WTC11 (cell line): ENCODE measurements at regions of chr17 and their contacts with region 1.

Region 1: GRCh38 chr17:4908301-4908700 is 5.4 kb upstream of the CHRNE start:
- DNase-seq: peak; percentile 50
- ATAC-seq: peak; percentile 44
- H3K4me3 Mint-ChIP-seq: no peak overlapping the region
- H3K27ac Mint-ChIP-seq: no peak overlapping the region
- H3K4me1 Mint-ChIP-seq: peaks cover 13% of the 10 kb centered on the region
- H3K27me3 Mint-ChIP-seq: peaks cover 5% of the 10 kb centered on the region; the same call in 1 of the 2 replicates
- CTCF ChIP-seq: no peak

Region 2: GRCh38 chr17:4881761-4882555 is 26.3 kb before region 1 on chr17:
- CTCF ChIA-PET with region 1: no interaction called
- POLR2A ChIA-PET with region 1: no interaction called
- DNase-seq: peak; percentile 85
- ATAC-seq: peak; percentile 96
- H3K4me3 Mint-ChIP-seq: no peak overlapping the region
- H3K27ac Mint-ChIP-seq: peak overlapping the region; percentile 83
- H3K4me1 Mint-ChIP-seq: peaks cover 13% of the 10 kb centered on the region
- H3K27me3 Mint-ChIP-seq: no peaks in the 10 kb centered on the region
- CTCF ChIP-seq: peak; percentile 81

Region 3: GRCh38 chr17:4920351-4921048 is 12.2 kb after region 1 on chr17:
- CTCF ChIA-PET with region 1: interaction called, 36 read pairs
- POLR2A ChIA-PET with region 1: interaction called, 12 read pairs
- DNase-seq: no peak
- ATAC-seq: no peak
- H3K4me3 Mint-ChIP-seq: no peak overlapping the region
- H3K27ac Mint-ChIP-seq: no peak overlapping the region
- H3K4me1 Mint-ChIP-seq: peaks cover 7% of the 10 kb centered on the region
- H3K27me3 Mint-ChIP-seq: no peaks in the 10 kb centered on the region; the same call in 1 of the 2 replicates
- CTCF ChIP-seq: no peak

Region 4: GRCh38 chr17:4939796-4940624 is 31.7 kb after region 1 on chr17 and contains the starts of genes RNF167 and SLC25A11:
- CTCF ChIA-PET with region 1: interaction called, 39 read pairs
- POLR2A ChIA-PET with region 1: interaction called, 3 read pairs
- DNase-seq: peak; percentile 93
- ATAC-seq: peak; percentile 84
- H3K4me3 Mint-ChIP-seq: peak within 1 kb of the TSS; percentile 96
- H3K27ac Mint-ChIP-seq: peak within 1 kb of the TSS; percentile 98
- H3K4me1 Mint-ChIP-seq: peaks cover 25% of the 10 kb centered on the region
- H3K27me3 Mint-ChIP-seq: no peaks in the 10 kb centered on the region
- CTCF ChIP-seq: no peak
- total RNA-seq, gene RNF167: 121 to 143 TPM (median 122 TPM) in 3 replicates
- total RNA-seq, gene SLC25A11: 73.7 to 83.3 TPM (median 76.8 TPM) in 3 replicates

Region 5: GRCh38 chr17:4966844-4967538 is 58.7 kb after region 1 on chr17:
- CTCF ChIA-PET with region 1: interaction called, 49 read pairs
- POLR2A ChIA-PET with region 1: interaction called, 5 read pairs
- DNase-seq: peak; percentile 97
- ATAC-seq: peak; percentile 93
- H3K4me3 Mint-ChIP-seq: no peak overlapping the region
- H3K27ac Mint-ChIP-seq: peak overlapping the region; percentile 90
- H3K4me1 Mint-ChIP-seq: peaks cover 22% of the 10 kb centered on the region
- H3K27me3 Mint-ChIP-seq: peaks cover 10% of the 10 kb centered on the region
- CTCF ChIP-seq: no peak

Region 6: GRCh38 chr17:5031365-5032082 is 123.2 kb after region 1 on chr17:
- CTCF ChIA-PET with region 1: interaction called, 10 read pairs
- POLR2A ChIA-PET with region 1: no interaction called
- DNase-seq: peak; percentile 85
- ATAC-seq: peak; percentile 62
- H3K4me3 Mint-ChIP-seq: peak overlapping the region; percentile 66
- H3K27ac Mint-ChIP-seq: no peak overlapping the region
- H3K4me1 Mint-ChIP-seq: no peaks in the 10 kb centered on the region
- H3K27me3 Mint-ChIP-seq: peaks cover 26% of the 10 kb centered on the region
- CTCF ChIP-seq: peak; percentile 84